ENCODE measurements at regions of chr16 and their contacts with region 1.

Region 1: GRCh38 chr16:57416122-57416509 is 11.5 kb downstream of the CCL17 start:
- DNase-seq: no peak
- H3K4me3 ChIP-seq: no peak overlapping the region
- H3K4me3 Mint-ChIP-seq: no peak overlapping the region
- H3K27ac ChIP-seq: no peak overlapping the region
- H3K27ac Mint-ChIP-seq: peak overlapping the region in 1 of 8 donors; percentile 8
- H3K4me1 ChIP-seq: peaks cover 20% of the 10 kb centered on the region
- H3K4me1 Mint-ChIP-seq: peaks cover 14 to 28% (median 18%) of the 10 kb centered on the region in 3 donors
- H3K27me3 ChIP-seq: no peaks in the 10 kb centered on the region
- H3K27me3 Mint-ChIP-seq: peaks cover under 1 to 2% of the 10 kb centered on the region in 2 donors

Region 2: GRCh38 chr16:57300387-57301125 is 115.6 kb before region 1 on chr16:
- CTCF ChIA-PET with region 1: interaction called, 127 read pairs
- POLR2A ChIA-PET with region 1: interaction called, 4 read pairs
- DNase-seq: peak; percentile 96 to 100 (median 99)
- H3K4me3 ChIP-seq: peak overlapping the region; percentile 64
- H3K4me3 Mint-ChIP-seq: no peak overlapping the region
- H3K27ac ChIP-seq: peak overlapping the region; percentile 68
- H3K27ac Mint-ChIP-seq: peak overlapping the region in 1 of 8 donors; percentile 32
- H3K4me1 ChIP-seq: peaks cover 26% of the 10 kb centered on the region
- H3K4me1 Mint-ChIP-seq: peaks cover 15 to 21% (median 19%) of the 10 kb centered on the region in 3 donors
- H3K27me3 ChIP-seq: no peaks in the 10 kb centered on the region
- H3K27me3 Mint-ChIP-seq: peaks cover 2 to 4% of the 10 kb centered on the region in 2 donors

Region 3: GRCh38 chr16:57341441-57342303 is 74.4 kb before region 1 on chr16:
- CTCF ChIA-PET with region 1: no interaction called
- POLR2A ChIA-PET with region 1: no interaction called
- DNase-seq: no peak
- H3K4me3 ChIP-seq: no peak overlapping the region
- H3K4me3 Mint-ChIP-seq: no peak overlapping the region
- H3K27ac ChIP-seq: no peak overlapping the region
- H3K27ac Mint-ChIP-seq: no peak overlapping the region
- H3K4me1 ChIP-seq: peaks cover 4% of the 10 kb centered on the region
- H3K4me1 Mint-ChIP-seq: peaks cover 0 to 4% (median 3%) of the 10 kb centered on the region in 3 donors
- H3K27me3 ChIP-seq: peaks cover 10% of the 10 kb centered on the region
- H3K27me3 Mint-ChIP-seq: peaks cover 40 to 70% of the 10 kb centered on the region in 2 donors

Region 4: DNA sequence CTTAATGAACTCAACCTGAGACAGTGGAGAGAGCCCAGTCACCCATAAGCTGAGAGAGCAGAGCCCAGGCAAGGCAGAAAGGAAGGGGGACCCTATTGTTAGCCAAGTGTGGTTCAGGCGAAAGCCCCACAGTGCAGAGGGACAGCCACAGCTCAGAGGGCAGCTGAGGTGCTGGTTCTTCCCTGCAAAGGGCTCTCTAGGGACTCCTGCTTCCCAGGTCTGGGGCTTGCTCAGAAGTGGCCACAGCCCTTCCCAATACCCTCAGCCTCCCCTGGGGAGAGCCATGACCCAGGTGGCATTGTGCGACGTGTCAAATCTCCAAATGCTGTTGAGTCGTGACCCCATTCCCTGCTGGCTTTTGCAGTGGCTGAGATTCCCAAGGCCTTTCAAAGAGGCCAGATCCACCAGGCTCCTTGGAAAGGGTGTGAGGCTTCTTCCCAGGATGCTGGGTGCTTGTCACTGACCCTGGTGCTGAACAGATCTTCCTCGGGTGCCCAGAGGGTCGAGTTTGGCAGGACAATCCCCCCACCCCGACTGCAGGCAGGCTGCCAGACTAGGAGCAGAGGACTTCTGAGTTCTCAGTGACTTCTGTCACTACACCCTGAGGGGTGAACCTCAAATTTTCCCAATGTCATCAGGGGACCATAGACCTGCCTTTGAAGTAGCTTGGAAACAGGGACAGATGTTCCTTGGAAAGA is 14.0 kb before region 1 on chr16:
- CTCF ChIA-PET with region 1: interaction called, 16 read pairs
- POLR2A ChIA-PET with region 1: no interaction called
- DNase-seq: peak in 1 of 5 donors; percentile 22
- H3K4me3 ChIP-seq: no peak overlapping the region
- H3K4me3 Mint-ChIP-seq: no peak overlapping the region
- H3K27ac ChIP-seq: no peak overlapping the region
- H3K27ac Mint-ChIP-seq: no peak overlapping the region
- H3K4me1 ChIP-seq: no peaks in the 10 kb centered on the region
- H3K4me1 Mint-ChIP-seq: no peaks in the 10 kb centered on the region
- H3K27me3 ChIP-seq: no peaks in the 10 kb centered on the region
- H3K27me3 Mint-ChIP-seq: peaks cover 3 to 4% of the 10 kb centered on the region in 2 donors

Region 5: DNA sequence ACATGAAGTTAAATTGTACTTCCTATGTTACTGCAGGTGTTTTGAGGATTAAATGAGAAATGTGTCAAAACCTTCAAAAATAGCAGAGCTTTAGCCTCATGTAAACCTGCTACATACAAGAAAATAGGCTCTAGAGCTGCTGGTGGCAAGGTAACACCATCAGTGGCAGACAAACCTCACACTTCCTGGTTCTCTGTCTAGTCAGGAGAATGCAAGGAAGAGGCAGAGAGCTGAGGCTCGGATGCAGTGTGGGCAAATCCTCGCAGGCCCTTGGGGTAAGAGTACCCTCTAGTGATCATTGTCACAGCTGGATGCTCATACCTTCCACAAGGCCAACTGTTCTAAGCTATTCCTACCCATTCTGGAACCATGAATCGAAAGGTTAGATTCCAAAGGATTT is 16.9 kb after region 1 on chr16:
- CTCF ChIA-PET with region 1: interaction called, 34 read pairs
- POLR2A ChIA-PET with region 1: no interaction called
- DNase-seq: peak in 1 of 5 donors; percentile 20
- H3K4me3 ChIP-seq: no peak overlapping the region
- H3K4me3 Mint-ChIP-seq: peak overlapping the region in 1 of 7 donors; percentile 27
- H3K27ac ChIP-seq: no peak overlapping the region
- H3K27ac Mint-ChIP-seq: peak overlapping the region in 1 of 8 donors; percentile 66
- H3K4me1 ChIP-seq: peaks cover 27% of the 10 kb centered on the region
- H3K4me1 Mint-ChIP-seq: peaks cover 0 to 2% (median 0%) of the 10 kb centered on the region in 3 donors
- H3K27me3 ChIP-seq: no peaks in the 10 kb centered on the region
- H3K27me3 Mint-ChIP-seq: peaks cover 0 to 1% of the 10 kb centered on the region in 2 donors

Region 6: DNA sequence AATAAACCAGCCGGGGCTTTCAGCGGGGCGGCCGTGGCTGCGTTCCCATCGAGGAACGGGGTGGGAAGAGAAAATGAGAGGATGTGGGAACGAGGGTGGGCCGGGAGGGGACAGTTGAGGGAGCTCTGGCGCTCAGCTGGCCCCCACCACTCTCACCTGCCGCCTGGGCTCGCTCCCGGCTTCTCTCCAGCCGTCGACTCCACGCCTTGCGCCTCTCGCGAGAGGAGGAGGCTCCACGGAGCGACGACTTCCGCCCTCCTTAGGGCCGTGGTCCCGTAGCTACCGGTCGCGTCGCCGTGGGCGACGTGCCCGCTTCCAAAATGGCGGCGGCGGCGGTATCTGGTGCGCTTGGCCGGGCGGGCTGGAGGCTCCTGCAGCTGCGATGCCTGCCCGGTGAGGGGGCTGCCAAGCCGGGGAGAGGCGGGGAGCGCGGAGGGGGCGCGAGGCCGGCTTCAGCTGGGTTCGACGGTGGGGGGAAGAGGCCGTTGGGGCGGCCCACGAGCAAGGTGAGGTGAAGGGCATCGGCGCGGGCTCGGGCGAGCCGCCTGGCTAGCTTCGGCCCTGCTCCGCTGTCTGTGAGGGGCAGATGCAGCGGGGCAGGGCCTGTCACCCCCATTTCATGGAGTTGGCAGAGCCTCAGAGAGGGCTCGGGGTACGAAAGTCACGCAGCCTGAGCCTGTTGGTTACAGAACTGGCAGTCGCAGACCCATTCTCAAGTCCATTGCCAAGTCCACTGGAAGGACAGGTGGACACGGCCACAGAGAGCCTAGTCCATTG is 31.3 kb after region 1 on chr16 and contains the starts of genes CIAPIN1 and COQ9:
- CTCF ChIA-PET with region 1: interaction called, 18 read pairs
- POLR2A ChIA-PET with region 1: interaction called, 3 read pairs
- DNase-seq: peak; percentile 88 to 96 (median 90)
- H3K4me3 ChIP-seq: peak within 1 kb of the TSS; percentile 93
- H3K4me3 Mint-ChIP-seq: peak within 1 kb of the TSS; percentile 88 to 97 (median 90)
- H3K27ac ChIP-seq: peak within 1 kb of the TSS; percentile 88
- H3K27ac Mint-ChIP-seq: peak within 1 kb of the TSS; percentile 81 to 97 (median 92)
- H3K4me1 ChIP-seq: peaks cover 26% of the 10 kb centered on the region
- H3K4me1 Mint-ChIP-seq: peaks cover 28 to 46% (median 37%) of the 10 kb centered on the region in 3 donors
- H3K27me3 ChIP-seq: no peaks in the 10 kb centered on the region
- H3K27me3 Mint-ChIP-seq: no peaks in the 10 kb centered on the region
- total RNA-seq, gene CIAPIN1: 79.0 to 81.1 TPM
- total RNA-seq, gene COQ9: 50.5 to 51.9 TPM

Measured in CD8-positive, alpha-beta memory T cell (primary cell).